ENCODE measurements at regions of chr17 and their contacts with region 1.

Region 1: GRCh38 chr17:65027305-65027704 is 29.2 kb downstream of the GNA13 start:
- DNase-seq: peak; percentile 64 to 87 (median 85)
- H3K4me3 ChIP-seq: no peak overlapping the region
- H3K4me3 Mint-ChIP-seq: no peak overlapping the region
- H3K27ac ChIP-seq: peak overlapping the region; percentile 36 to 76
- H3K27ac Mint-ChIP-seq: peak overlapping the region in 6 of 7 donors; percentile 82 to 91 (median 88)
- H3K4me1 ChIP-seq: peaks cover 27 to 40% of the 10 kb centered on the region in 2 donors
- H3K4me1 Mint-ChIP-seq: peaks cover 50% of the 10 kb centered on the region
- H3K27me3 ChIP-seq: no peaks in the 10 kb centered on the region
- H3K27me3 Mint-ChIP-seq: no peaks in the 10 kb centered on the region
- CTCF ChIP-seq: peak; percentile 73

Region 2: DNA sequence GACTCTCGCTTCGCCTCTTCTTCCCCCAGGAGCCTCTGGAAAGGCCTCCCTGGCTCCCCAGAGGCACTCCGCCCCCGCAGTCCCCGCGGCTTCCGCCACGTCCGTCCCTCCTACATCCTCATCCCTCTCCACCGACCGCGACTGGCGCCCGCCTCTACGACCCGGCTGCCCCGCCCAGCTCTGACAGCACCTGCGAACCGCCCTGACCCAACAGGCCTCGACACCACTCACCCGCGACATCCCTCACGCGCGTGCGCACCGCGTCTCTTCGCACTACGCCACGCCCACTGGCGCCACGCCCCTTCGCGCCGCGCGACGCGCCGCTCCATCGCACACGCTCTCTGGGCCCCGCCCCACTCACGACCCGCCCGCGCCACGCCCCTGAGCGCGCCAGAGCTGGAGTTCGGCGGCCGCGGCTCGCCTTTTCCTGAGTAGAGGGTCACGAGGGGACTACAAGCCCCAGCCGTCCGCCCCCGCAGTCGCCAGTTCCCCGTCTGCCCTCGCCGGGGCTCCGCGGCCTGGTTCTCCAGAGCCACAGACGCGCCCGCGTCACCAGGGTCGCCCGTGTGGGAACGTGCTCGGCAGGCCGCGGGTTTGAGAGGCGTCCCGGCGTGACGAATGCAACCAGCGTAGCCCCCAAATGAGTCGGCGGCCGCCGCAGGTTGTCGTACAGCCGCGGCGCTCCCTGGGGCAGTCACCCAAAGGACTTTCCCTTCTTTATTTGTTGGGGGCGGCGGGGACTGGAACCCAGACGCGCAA is 51.8 kb before region 1 on chr17:
- intact Hi-C with region 1: loop called in 1 of 2 experiments (anchors 10 kb)
- DNase-seq: peak; percentile 95 to 99 (median 96)
- H3K4me3 ChIP-seq: peak overlapping the region; percentile 37 to 84 (median 75)
- H3K4me3 Mint-ChIP-seq: peak overlapping the region; percentile 88 to 95
- H3K27ac ChIP-seq: peak overlapping the region; percentile 98
- H3K27ac Mint-ChIP-seq: peak overlapping the region; percentile 98 to 100 (median 99)
- H3K4me1 ChIP-seq: peaks cover 24 to 27% of the 10 kb centered on the region in 2 donors
- H3K4me1 Mint-ChIP-seq: peaks cover 27% of the 10 kb centered on the region
- H3K27me3 ChIP-seq: no peaks in the 10 kb centered on the region
- H3K27me3 Mint-ChIP-seq: peaks cover 0 to 4% (median 0%) of the 10 kb centered on the region in 3 donors
- CTCF ChIP-seq: no peak

Region 3: GRCh38 chr17:64984851-64985521 is 42.3 kb before region 1 on chr17:
- intact Hi-C with region 1: loop called in 1 of 2 experiments (anchors 5 kb)
- DNase-seq: peak; percentile 29 to 51 (median 34)
- H3K4me3 ChIP-seq: peak overlapping the region in 1 of 3 experiments; percentile 55
- H3K4me3 Mint-ChIP-seq: peak overlapping the region; percentile 74 to 83
- H3K27ac ChIP-seq: peak overlapping the region; percentile 98
- H3K27ac Mint-ChIP-seq: peak overlapping the region; percentile 100
- H3K4me1 ChIP-seq: peaks cover 23 to 34% of the 10 kb centered on the region in 2 donors
- H3K4me1 Mint-ChIP-seq: peaks cover 36% of the 10 kb centered on the region
- H3K27me3 ChIP-seq: no peaks in the 10 kb centered on the region
- H3K27me3 Mint-ChIP-seq: peaks cover 0 to 1% (median 0%) of the 10 kb centered on the region in 3 donors
- CTCF ChIP-seq: no peak

Region 4: GRCh38 chr17:65047942-65048341 is 20.6 kb after region 1 on chr17:
- intact Hi-C with region 1: loop called in 1 of 2 experiments (anchors 2 kb)
- DNase-seq: peak; percentile 82 to 93 (median 91)
- H3K4me3 ChIP-seq: peak overlapping the region in 2 of 3 experiments; percentile 23 to 54
- H3K4me3 Mint-ChIP-seq: peak overlapping the region; percentile 39 to 63
- H3K27ac ChIP-seq: peak overlapping the region; percentile 64 to 91
- H3K27ac Mint-ChIP-seq: peak overlapping the region; percentile 94 to 98 (median 96)
- H3K4me1 ChIP-seq: peaks cover 35 to 56% of the 10 kb centered on the region in 2 donors
- H3K4me1 Mint-ChIP-seq: peaks cover 61% of the 10 kb centered on the region
- H3K27me3 ChIP-seq: no peaks in the 10 kb centered on the region
- H3K27me3 Mint-ChIP-seq: no peaks in the 10 kb centered on the region
- CTCF ChIP-seq: no peak

Region 5: GRCh38 chr17:65109990-65110680 is 82.8 kb after region 1 on chr17:
- intact Hi-C with region 1: no loop called
- DNase-seq: no peak
- H3K4me3 ChIP-seq: no peak overlapping the region
- H3K4me3 Mint-ChIP-seq: no peak overlapping the region
- H3K27ac ChIP-seq: no peak overlapping the region
- H3K27ac Mint-ChIP-seq: no peak overlapping the region
- H3K4me1 ChIP-seq: no peaks in the 10 kb centered on the region
- H3K4me1 Mint-ChIP-seq: peaks cover 5% of the 10 kb centered on the region
- H3K27me3 ChIP-seq: no peaks in the 10 kb centered on the region
- H3K27me3 Mint-ChIP-seq: peaks cover 0 to 3% (median 0%) of the 10 kb centered on the region in 3 donors
- CTCF ChIP-seq: no peak

Region 6: GRCh38 chr17:65759532-65759931 is 732.2 kb after region 1 on chr17:
- intact Hi-C with region 1: no loop called
- DNase-seq: no peak
- H3K4me3 ChIP-seq: no peak overlapping the region
- H3K4me3 Mint-ChIP-seq: no peak overlapping the region
- H3K27ac ChIP-seq: no peak overlapping the region
- H3K27ac Mint-ChIP-seq: no peak overlapping the region
- H3K4me1 ChIP-seq: no peaks in the 10 kb centered on the region
- H3K4me1 Mint-ChIP-seq: no peaks in the 10 kb centered on the region
- H3K27me3 ChIP-seq: no peaks in the 10 kb centered on the region
- H3K27me3 Mint-ChIP-seq: peaks cover 1 to 2% (median 2%) of the 10 kb centered on the region in 3 donors
- CTCF ChIP-seq: no peak